ENCODE measurements at regions of chr6 and their contacts with region 1.

Region 1: GRCh38 chr6:73675466-73676098 is 20.4 kb upstream of the CD109 start:
- DNase-seq: peak; percentile 26 to 85 (median 62)
- H3K4me3 ChIP-seq: no peak overlapping the region
- H3K27ac ChIP-seq: no peak overlapping the region
- H3K27me3 ChIP-seq: peaks cover 0 to 3% (median 0%) of the 10 kb centered on the region in 45 donors
- CTCF ChIP-seq: peak; percentile 75 to 94 (median 86)

Region 2: DNA sequence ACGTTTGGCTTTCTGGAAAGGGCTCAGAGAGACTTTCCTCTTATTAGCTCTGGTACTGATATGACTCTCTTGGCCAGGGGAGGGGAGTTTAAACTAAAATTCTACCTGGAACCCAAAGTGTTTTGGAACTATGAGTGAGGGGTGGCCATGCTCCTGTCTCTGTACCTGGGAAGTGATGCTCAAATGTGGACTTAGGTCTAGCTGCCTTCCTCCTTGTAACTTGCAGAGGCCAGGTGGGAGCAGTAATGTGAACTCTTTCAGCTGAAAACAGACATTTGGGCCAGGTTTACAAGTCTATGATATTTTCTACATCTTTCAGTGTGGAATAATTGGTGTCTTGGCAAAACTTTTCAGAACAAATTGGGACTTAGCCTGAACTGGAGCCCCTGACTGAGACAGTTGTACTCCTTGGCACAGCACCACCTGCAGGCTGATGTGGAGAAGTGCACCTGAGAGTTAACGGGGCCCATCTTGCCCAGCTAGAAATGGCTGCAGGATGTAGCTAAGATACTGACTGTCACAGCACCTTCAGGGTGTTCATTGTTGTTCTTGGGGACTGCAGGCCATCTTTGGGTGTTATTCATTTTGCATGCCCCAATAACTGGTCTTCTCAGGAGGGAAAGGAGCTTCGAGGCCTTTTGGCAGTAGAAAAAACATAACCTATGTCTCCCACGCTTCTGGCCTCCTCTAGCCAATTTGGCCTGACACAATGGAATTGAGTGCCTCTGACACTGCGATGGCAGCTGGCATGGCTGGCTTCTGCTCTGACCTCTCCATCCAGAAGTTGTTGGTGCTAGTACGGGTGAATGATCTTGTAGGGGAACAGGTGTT is 57.5 kb after region 1 on chr6:
- intact Hi-C with region 1: loop called (anchors 5 kb)
- DNase-seq: peak; percentile 22 to 69 (median 48)
- H3K4me3 ChIP-seq: no peak overlapping the region
- H3K27ac ChIP-seq: no peak overlapping the region
- H3K27me3 ChIP-seq: no peaks in the 10 kb centered on the region
- CTCF ChIP-seq: peak; percentile 66 to 93 (median 84)

Measured in dorsolateral prefrontal cortex (tissue), 120 donors.